RWPE1 (cell line): ENCODE measurements at regions of chr1 and their contacts with region 1.

Region 1: GRCh38 chr1:39609618-39610331 is 29.7 kb downstream of the HEYL start:
- DNase-seq: peak; percentile 39
- H3K27ac ChIP-seq: no peak overlapping the region
- CTCF ChIP-seq: peak; percentile 73

Region 2: GRCh38 chr1:39344394-39345154 is 265.2 kb before region 1 on chr1:
- CTCF ChIA-PET with region 1: no interaction called
- POLR2A ChIA-PET with region 1: no interaction called
- DNase-seq: no peak
- H3K27ac ChIP-seq: no peak overlapping the region
- CTCF ChIP-seq: no peak

Region 3: DNA sequence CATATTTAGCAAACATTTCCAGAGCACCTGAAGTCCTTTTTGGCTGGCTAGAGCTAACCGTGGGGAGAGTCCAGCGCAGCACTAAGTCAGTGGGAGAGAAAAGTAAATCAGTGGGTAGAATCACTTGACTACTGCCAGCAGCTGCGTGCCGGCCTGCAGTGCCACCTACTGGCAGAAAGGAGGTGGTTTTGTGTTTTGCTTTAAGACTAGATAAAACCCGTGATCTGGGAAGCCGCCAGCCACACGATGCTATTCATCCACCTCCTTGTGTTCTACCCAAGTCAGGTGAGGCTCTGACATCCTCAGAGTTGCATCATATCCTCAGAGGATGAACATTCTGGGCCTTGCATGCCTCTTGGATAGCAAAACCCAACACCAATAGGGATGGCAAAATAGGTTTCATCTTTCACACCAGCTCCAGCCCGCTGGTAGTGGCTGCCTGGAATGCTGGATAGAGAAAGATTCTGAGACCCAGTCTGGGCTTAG is 43.8 kb after region 1 on chr1:
- CTCF ChIA-PET with region 1: interaction called, 15 read pairs
- POLR2A ChIA-PET with region 1: no interaction called
- DNase-seq: peak; percentile 60
- H3K27ac ChIP-seq: no peak overlapping the region
- CTCF ChIP-seq: peak; percentile 87

Region 4: GRCh38 chr1:39720094-39720999 is 110.6 kb after region 1 on chr1:
- CTCF ChIA-PET with region 1: interaction called, 10 read pairs
- POLR2A ChIA-PET with region 1: no interaction called
- DNase-seq: peak; percentile 38
- H3K27ac ChIP-seq: no peak overlapping the region
- CTCF ChIP-seq: peak; percentile 75